ENCODE measurements at regions of chr10 and their contacts with region 1.

Region 1: DNA sequence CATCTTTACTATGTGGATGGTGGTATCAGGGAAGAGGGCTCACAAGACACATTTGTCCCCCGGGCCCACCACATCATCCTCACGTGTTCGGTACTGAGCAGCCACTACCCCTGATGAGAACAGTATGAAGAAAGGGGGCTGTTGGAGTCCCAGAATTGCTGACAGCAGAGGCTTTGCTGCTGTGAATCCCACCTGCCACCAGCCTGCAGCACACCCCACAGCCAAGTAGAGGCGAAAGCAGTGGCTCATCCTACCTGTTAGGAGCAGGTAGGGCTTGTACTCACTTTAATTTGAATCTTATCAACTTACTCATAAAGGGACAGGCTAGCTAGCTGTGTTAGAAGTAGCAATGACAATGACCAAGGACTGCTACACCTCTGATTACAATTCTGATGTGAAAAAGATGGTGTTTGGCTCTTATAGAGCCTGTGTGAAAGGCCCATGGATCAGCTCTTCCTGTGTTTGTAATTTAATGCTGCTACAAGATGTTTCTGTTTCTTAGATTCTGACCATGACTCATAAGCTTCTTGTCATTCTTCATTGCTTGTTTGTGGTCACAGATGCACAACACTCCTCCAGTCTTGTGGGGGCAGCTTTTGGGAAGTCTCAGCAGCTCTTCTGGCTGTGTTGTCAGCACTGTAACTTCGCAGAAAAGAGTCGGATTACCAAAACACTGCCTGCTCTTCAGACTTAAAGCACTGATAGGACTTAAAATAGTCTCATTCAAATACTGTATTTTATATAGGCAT is 9.1 kb upstream of the CSGALNACT2 start:
- DNase-seq: peak; percentile 57
- H3K4me3 Mint-ChIP-seq: peak overlapping the region; percentile 40
- H3K27ac Mint-ChIP-seq: peak overlapping the region; percentile 67
- H3K4me1 Mint-ChIP-seq: peaks cover 85% of the 10 kb centered on the region
- H3K27me3 Mint-ChIP-seq: no peaks in the 10 kb centered on the region

Region 2: GRCh38 chr10:43160046-43160918 is 31.1 kb after region 1 on chr10:
- intact Hi-C with region 1: loop called (anchors 5 kb)
- DNase-seq: no peak
- H3K4me3 Mint-ChIP-seq: no peak overlapping the region
- H3K27ac Mint-ChIP-seq: peak overlapping the region; percentile 81
- H3K4me1 Mint-ChIP-seq: peaks cover 63% of the 10 kb centered on the region
- H3K27me3 Mint-ChIP-seq: no peaks in the 10 kb centered on the region

Region 3: GRCh38 chr10:43816351-43817321 is 687.5 kb after region 1 on chr10:
- intact Hi-C with region 1: loop called (anchors 5 kb)
- DNase-seq: peak; percentile 74
- H3K4me3 Mint-ChIP-seq: peak overlapping the region; percentile 70
- H3K27ac Mint-ChIP-seq: peak overlapping the region; percentile 69
- H3K4me1 Mint-ChIP-seq: peaks cover 30% of the 10 kb centered on the region
- H3K27me3 Mint-ChIP-seq: peaks cover 32% of the 10 kb centered on the region